ENCODE measurements at regions of chr11 and their contacts with region 1.

Region 1: DNA sequence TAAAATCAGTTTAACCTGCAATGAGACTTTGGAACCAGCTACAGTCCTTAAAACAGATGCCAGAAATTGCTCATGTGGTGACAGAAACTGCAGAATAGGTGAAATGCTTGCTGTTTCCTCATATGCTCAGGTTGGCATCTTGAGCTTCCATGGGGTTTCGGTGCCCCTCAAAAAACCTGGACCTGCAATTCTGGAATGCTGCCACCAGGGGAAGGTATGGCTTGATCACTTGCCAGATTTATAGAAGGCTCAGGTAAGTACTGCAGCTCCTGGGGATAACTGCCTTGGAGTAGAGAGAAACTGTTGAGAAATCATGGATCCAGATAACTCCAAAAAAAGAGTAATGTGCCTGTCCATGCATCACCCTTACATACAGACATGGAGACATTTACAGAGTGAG is 113.0 kb downstream of the CTTN start:
- DNase-seq: no peak
- H3K4me3 ChIP-seq: no peak overlapping the region
- H3K27ac ChIP-seq: no peak overlapping the region
- H3K4me1 ChIP-seq: peaks cover 0 to 7% (median 3%) of the 10 kb centered on the region in 4 experiments; a peak in 5 of 7 replicates
- H3K27me3 ChIP-seq: no peaks in the 10 kb centered on the region; a peak in 1 of 7 replicates
- CTCF ChIP-seq: peak; percentile 60 to 80 (median 76)
- EP300 ChIP-seq: no peak
- POLR2A ChIP-seq: no peak
- RAD21 ChIP-seq: peak; percentile 56 to 75

Region 2: GRCh38 chr11:70383664-70384565 is 127.4 kb before region 1 on chr11:
- CTCF ChIA-PET with region 1: no interaction called
- POLR2A ChIA-PET with region 1: no interaction called
- DNase-seq: no peak
- H3K4me3 ChIP-seq: no peak overlapping the region
- H3K27ac ChIP-seq: no peak overlapping the region
- H3K4me1 ChIP-seq: peaks cover 0 to 15% (median 5%) of the 10 kb centered on the region in 4 experiments; a peak in 3 of 7 replicates
- H3K27me3 ChIP-seq: no peaks in the 10 kb centered on the region
- CTCF ChIP-seq: no peak
- EP300 ChIP-seq: no peak
- POLR2A ChIP-seq: no peak
- RAD21 ChIP-seq: no peak

Region 3: DNA sequence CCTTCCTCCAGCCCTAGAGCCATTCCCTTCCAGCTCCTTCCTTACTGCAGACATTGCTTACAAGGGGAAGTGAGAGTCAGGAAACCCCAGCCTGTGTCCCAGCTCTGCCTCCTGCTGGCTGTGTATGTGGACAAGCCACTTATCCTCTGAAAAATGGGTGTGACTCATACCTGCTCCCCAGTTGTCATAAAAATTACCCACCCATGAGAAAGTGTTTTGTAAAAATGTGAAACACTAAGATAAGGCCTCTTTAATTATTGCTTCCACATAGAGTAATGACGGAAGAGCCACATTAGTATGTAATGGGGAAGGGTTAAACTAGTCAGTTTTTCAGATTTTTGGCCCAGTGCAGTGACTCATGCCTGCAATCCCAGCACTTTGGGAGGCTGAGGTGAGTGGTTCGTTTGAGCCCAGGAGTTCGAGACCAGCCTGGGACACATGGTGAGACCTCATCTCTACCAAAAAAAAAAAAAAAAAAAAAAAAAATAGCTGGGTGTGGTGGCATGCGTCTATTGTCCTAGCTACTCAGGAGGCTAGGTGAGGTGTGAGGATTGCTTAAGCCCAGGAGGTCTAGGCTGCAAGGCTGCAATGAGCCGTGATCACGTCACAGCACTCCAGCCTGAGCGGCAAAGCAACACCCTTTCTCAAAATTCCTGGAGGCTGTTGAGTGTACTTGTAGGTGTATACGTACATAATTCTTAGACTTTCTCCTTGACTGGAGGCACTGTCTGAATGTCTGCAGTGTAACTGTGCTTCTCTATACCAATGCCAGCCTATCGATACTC is 28.1 kb before region 1 on chr11:
- CTCF ChIA-PET with region 1: interaction called, 12 read pairs
- POLR2A ChIA-PET with region 1: no interaction called
- DNase-seq: no peak
- H3K4me3 ChIP-seq: no peak overlapping the region
- H3K27ac ChIP-seq: no peak overlapping the region
- H3K4me1 ChIP-seq: no peaks in the 10 kb centered on the region
- H3K27me3 ChIP-seq: no peaks in the 10 kb centered on the region
- CTCF ChIP-seq: peak; percentile 26 to 50 (median 45); a peak in 3 of 4 replicates
- EP300 ChIP-seq: no peak
- POLR2A ChIP-seq: no peak
- RAD21 ChIP-seq: peak; percentile 20 to 21; a peak in 2 of 4 replicates

Region 4: GRCh38 chr11:70544809-70545537 is 33.6 kb after region 1 on chr11:
- CTCF ChIA-PET with region 1: interaction called, 11 read pairs
- POLR2A ChIA-PET with region 1: no interaction called
- DNase-seq: peak in 1 of 2 experiments; percentile 57
- H3K4me3 ChIP-seq: no peak overlapping the region
- H3K27ac ChIP-seq: no peak overlapping the region
- H3K4me1 ChIP-seq: peaks cover 0 to 21% (median 16%) of the 10 kb centered on the region in 4 experiments; a peak in 6 of 7 replicates
- H3K27me3 ChIP-seq: no peaks in the 10 kb centered on the region
- CTCF ChIP-seq: no peak
- EP300 ChIP-seq: no peak
- POLR2A ChIP-seq: no peak
- RAD21 ChIP-seq: no peak

Region 5: GRCh38 chr11:70568038-70568813 is 56.9 kb after region 1 on chr11:
- CTCF ChIA-PET with region 1: interaction called, 22 read pairs
- POLR2A ChIA-PET with region 1: no interaction called
- DNase-seq: peak; percentile 33 to 72
- H3K4me3 ChIP-seq: peak overlapping the region in 1 of 4 experiments; percentile 32; a peak in 1 of 8 replicates
- H3K27ac ChIP-seq: no peak overlapping the region; the same call in 1 of the 2 replicates
- H3K4me1 ChIP-seq: peaks cover 3 to 14% (median 12%) of the 10 kb centered on the region in 4 experiments
- H3K27me3 ChIP-seq: no peaks in the 10 kb centered on the region; a peak in 1 of 7 replicates
- CTCF ChIP-seq: peak; percentile 41 to 56 (median 56)
- EP300 ChIP-seq: no peak
- POLR2A ChIP-seq: no peak
- RAD21 ChIP-seq: peak; percentile 55 to 63

Region 6: GRCh38 chr11:70580036-70580845 is 68.9 kb after region 1 on chr11:
- CTCF ChIA-PET with region 1: interaction called, 11 read pairs
- POLR2A ChIA-PET with region 1: no interaction called
- DNase-seq: peak in 1 of 2 experiments; percentile 54
- H3K4me3 ChIP-seq: no peak overlapping the region
- H3K27ac ChIP-seq: no peak overlapping the region
- H3K4me1 ChIP-seq: peaks cover 0 to 10% (median 4%) of the 10 kb centered on the region in 4 experiments; a peak in 5 of 7 replicates
- H3K27me3 ChIP-seq: no peaks in the 10 kb centered on the region
- CTCF ChIP-seq: no peak
- EP300 ChIP-seq: no peak
- POLR2A ChIP-seq: no peak
- RAD21 ChIP-seq: no peak